ENCODE measurements at regions of chr11 and their contacts with region 1.

Region 1: GRCh38 chr11:66311965-66312548 is 4.8 kb downstream of the CD248 start:
- DNase-seq: peak; percentile 87
- CTCF ChIP-seq: peak; percentile 16

Region 2: GRCh38 chr11:65945430-65945911 is 366.6 kb before region 1 on chr11 and contains the start of gene TSGA10IP:
- CTCF ChIA-PET with region 1: no interaction called
- POLR2A ChIA-PET with region 1: no interaction called
- DNase-seq: no peak
- CTCF ChIP-seq: no peak

Region 3: DNA sequence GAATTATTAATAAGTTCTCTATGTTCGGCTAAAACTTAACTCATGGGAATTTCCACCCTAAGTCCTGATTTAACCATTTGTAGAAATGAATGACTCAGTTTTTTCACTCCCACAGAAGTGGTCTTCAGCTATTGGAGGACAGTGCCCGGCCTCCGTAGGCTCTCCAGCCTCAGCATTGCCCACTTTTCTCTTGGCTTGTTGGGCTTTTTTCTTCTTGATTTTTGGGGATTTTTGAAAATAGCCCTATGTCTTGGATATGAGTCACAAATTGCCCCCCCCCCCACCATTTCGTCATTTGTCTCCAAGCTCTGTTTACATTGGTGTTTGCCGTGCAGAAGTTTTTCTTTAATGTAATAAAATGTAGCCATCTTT is 175.3 kb before region 1 on chr11:
- CTCF ChIA-PET with region 1: no interaction called
- POLR2A ChIA-PET with region 1: no interaction called
- DNase-seq: no peak
- CTCF ChIP-seq: no peak

Region 4: GRCh38 chr11:66282468-66283386 is 29.3 kb before region 1 on chr11:
- CTCF ChIA-PET with region 1: interaction called, 18 read pairs
- POLR2A ChIA-PET with region 1: no interaction called
- DNase-seq: peak; percentile 99
- CTCF ChIP-seq: peak; percentile 98

Region 5: DNA sequence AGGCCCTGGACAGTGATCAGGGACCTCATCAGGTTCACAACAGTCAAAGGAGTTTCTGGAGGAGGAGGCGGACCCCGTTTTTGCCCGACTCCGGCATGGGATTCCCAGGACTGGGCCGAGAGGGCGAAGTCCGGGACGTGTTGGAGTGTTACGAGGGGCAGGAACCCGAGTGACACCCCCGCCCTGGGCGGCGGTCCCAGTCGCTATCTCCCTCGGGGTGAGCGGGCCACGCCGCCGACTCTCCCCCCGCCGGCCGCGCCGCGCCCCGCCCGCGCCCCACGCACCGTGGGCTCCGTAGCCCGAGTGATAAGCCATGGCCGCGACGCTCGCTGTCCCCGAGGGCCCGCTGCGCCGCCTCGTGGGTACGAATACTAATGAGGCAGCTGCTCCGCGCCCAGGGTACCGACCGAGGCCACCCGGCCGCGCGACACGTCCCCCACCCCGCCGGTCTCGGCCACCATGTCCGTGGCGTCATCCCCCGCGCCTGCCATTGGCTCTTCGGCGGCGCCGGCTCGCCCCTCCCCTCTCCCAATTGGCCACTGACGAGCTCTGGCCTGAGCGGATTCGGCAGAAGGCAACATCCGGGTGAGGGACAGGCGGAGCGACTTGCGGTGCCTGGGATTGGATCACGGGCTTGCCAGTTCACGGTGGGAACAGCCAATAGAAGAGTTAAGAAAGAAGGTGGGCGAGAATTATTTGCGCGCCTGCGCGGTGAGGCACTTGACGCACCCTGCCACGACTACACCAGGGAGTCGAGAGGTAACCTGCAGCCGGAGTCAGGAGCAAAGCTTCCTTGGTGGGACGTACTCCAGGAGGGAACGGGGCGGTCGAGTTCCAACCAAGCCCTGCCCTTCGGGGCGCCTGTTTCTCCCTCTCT is 23.1 kb before region 1 on chr11 and contains the start of gene YIF1A:
- CTCF ChIA-PET with region 1: interaction called, 21 read pairs
- POLR2A ChIA-PET with region 1: interaction called, 14 read pairs
- DNase-seq: peak; percentile 100
- CTCF ChIP-seq: no peak

Region 6: GRCh38 chr11:66299186-66299585 is 12.9 kb before region 1 on chr11:
- CTCF ChIA-PET with region 1: interaction called, 81 read pairs
- POLR2A ChIA-PET with region 1: no interaction called
- DNase-seq: no peak
- CTCF ChIP-seq: no peak

Region 7: DNA sequence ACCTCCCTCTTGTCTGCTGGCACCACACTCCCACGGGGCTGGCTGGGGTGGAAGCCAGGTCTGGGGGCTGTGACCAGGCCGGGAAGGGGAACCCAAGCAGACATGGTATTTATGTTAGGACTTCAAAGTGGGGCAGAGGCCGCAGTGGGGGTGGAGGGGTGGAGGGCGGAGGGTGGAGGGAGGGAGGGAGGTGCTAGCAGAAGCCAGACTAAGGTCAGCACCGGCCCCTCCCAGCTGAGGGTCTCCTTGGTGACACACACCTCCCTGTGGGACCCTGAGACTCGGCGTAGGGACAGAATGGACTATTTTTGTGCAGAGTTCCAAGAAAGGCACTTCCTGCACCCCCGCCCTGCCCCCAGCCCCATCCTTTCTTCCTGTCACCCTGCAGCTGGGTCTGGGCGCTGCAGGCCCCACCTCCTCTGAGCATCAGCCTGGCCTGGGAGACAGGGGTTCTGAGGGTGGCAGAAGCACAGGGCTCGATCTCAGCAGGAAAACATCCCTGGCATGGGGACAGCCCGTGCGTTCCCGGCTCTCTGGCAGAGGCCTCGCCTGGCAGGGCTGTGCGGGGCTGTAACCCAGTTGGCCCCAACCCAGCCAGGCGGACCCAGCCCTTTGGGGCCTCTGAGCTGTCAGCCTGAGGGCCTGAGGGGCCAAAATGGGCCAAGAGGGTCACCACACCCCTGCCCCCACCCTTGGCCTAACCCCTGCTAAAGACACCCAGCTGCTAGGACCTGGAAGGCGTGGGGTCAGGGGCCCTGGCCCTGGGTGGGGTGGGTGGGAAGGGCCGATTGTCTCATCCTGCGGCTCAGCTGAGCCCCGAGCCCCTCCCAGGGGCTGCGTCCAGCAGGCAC is 14.4 kb after region 1 on chr11:
- CTCF ChIA-PET with region 1: interaction called, 126 read pairs
- POLR2A ChIA-PET with region 1: no interaction called
- DNase-seq: no peak
- CTCF ChIP-seq: no peak

Region 8: GRCh38 chr11:66336234-66337102 is 24.4 kb after region 1 on chr11 and contains the start of gene RIN1:
- CTCF ChIA-PET with region 1: interaction called, 126 read pairs
- POLR2A ChIA-PET with region 1: interaction called, 4 read pairs
- DNase-seq: peak; percentile 80
- CTCF ChIP-seq: peak; percentile 40

Region 9: DNA sequence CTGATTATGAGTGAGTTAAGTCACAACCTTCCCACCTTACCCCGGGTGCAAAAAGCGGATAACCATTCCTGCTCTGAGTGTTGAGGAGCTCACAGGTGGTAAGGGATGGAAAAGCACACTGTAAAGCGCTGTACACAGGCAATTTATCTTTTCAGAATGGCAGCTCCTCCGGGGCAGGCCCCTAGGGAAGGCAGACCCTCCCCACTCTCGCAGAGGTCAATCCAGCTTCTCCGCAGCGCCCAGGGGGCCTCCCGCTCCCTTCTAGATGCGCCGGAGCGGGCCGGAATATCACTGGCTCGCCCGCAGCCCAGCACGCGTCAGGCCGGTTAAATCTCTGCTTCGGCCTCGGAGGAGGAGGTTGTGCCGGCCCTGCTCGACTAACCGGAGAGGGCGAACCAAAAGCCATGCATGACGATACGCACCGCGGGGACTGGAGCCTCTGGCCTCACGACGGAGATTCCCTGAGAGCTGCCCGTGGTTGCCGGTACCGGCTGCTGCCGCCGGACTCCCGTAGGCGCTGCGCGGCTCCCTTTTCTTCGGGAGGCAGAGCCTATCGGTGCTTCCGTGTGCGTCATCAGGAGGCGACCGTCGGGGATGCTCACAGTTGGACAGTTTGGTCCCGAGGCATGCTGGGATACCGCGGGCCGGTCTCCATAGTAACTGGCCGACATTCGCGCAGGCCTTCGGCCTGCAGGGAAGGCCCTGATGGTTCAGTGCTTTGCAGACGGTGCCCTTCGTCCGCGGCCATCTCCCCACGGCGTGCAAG is 32.7 kb after region 1 on chr11 and contains the start of gene BRMS1:
- CTCF ChIA-PET with region 1: interaction called, 37 read pairs
- POLR2A ChIA-PET with region 1: no interaction called
- DNase-seq: peak; percentile 96
- CTCF ChIP-seq: no peak

Region 10: GRCh38 chr11:66762088-66762487 is 450.0 kb after region 1 on chr11:
- CTCF ChIA-PET with region 1: no interaction called
- POLR2A ChIA-PET with region 1: no interaction called
- DNase-seq: no peak
- CTCF ChIP-seq: no peak